ENCODE measurements at regions of chr5 and their contacts with region 1.

Region 1: DNA sequence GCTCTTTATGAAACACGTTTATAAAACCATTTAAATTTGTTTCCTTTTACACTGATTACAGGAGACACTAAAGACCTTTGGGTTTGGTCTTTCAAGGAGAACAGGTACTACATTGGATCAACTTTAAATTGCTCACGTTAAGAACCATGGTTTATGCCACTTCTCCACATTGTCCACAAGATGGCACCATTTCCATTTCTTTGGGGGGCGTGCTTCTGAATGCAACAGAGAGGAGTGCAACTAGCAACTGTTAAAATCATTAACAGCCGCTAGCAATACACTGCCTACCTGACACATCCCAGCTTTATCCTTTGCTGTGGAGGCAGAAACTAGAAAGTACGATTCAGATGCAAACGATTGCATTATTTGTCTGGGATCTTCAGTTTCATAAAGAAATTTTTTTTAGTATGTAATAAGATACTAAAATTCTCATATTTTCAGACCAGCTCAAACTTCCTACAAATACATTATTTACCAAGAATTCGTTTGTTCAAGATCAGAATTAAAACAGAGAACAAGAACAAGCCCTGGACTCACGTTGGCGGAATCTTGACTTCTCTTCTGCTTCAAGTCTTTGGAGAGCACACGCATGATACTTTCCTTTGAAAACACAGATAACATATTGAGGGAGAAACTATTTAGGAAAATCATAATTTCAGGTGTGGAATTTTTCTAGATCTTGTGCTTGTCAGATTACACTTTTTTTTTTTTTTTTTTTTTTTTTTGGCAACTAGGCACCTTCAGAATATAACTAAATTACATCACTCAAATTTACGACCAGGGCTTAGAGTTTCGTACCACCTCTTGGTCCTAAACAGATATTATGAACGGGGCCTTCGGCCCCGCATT is 702 bp downstream of the CDC20B start:
- DNase-seq: peak; percentile 82
- CTCF ChIP-seq: peak; percentile 80

Region 2: DNA sequence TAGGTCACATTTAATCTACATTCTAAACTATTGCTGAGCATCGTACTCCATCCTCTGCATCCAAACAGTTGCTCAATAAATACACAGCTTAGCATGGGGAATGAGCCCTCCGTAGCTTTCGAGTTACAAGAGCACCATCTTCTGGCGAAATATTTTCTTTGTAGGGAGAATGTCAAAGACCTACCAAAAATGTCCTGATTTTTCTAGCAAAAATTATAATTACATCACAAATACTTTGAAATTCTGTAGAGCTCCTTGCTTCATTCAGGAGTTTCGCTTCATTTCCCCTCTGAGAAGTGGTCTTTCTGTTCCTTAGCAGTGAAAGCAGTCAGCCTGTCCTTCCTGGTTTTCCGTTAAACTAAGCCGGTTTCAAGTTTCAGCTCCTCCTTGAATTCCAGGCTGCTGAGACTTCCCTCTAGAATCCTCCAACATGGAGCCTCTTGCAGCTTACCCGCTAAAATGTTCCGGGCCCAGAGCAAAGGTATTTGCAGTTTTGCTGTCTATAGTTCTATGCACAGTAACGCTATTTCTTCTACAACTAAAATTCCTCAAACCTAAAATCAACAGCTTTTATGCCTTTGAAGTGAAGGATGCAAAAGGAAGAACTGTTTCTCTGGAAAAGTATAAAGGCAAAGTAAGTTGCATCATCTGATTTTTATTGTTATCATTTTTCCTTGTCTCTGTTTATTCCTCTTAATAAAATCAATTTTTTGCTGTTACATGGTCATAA is 12.3 kb before region 1 on chr5 and contains the start of gene GPX8:
- CTCF ChIA-PET with region 1: interaction called, 12 read pairs
- POLR2A ChIA-PET with region 1: no interaction called
- DNase-seq: no peak
- CTCF ChIP-seq: no peak

Region 3: GRCh38 chr5:55187370-55187769 is 15.1 kb after region 1 on chr5:
- CTCF ChIA-PET with region 1: interaction called, 10 read pairs
- POLR2A ChIA-PET with region 1: no interaction called
- DNase-seq: no peak
- CTCF ChIP-seq: peak; percentile 25

Region 4: DNA sequence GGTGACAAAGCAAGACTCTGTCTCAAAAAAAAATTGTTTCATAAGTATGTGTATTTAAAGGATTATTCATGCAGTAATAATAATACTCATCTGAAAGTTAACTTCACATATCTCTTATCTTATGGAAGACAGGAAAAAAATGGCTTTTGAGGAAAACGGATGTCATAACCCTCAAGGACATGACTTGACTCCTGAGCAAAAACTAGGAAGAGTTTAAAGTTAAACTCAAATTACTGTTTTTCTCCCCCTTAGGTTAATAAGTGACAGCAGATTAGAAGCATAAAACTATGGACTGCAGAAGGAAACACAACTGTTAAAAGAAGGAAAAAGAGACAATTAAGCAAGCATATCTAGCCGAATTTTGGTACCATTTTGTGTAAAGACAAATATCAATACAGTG is 118.7 kb after region 1 on chr5:
- CTCF ChIA-PET with region 1: no interaction called
- POLR2A ChIA-PET with region 1: no interaction called
- DNase-seq: no peak
- CTCF ChIP-seq: no peak